Pancreas (tissue), 10 donors: ENCODE measurements at regions of chr3 and their contacts with region 1.

Region 1: DNA sequence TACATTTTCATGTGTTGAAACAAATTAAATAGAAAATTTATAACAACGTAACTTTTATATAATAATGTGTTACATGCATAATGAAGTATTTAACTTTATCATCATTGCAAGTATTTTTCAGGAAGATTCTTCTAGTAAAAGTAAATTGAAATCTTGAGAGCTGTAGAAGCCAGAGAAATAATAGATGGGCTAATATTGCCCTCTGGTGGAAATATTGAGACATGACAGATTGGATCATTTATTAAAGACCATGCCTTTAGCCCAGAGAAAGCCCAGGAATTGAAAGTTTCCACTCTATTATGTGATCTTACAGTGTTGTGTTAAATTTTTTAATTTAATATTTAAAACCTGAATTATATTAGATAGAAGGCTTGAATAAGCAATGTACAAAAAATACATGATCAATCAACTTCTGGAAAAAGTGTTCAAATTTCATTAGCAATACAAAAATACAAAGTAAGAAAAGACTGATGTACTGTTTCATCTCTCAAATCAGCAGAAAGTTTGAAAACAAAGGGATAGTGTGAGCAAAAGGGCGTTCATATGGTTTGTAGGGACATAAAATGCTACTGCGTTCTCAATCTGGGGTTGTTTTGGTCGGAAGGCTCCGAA is 52.7 kb upstream of the SPTSSB start:
- DNase-seq: no peak
- ATAC-seq: peak; percentile 68 to 86 (median 78)
- H3K4me3 ChIP-seq: no peak overlapping the region
- H3K27ac ChIP-seq: no peak overlapping the region
- H3K4me1 ChIP-seq: no peaks in the 10 kb centered on the region
- H3K27me3 ChIP-seq: no peaks in the 10 kb centered on the region
- CTCF ChIP-seq: peak; percentile 30 to 70 (median 64)

Region 2: DNA sequence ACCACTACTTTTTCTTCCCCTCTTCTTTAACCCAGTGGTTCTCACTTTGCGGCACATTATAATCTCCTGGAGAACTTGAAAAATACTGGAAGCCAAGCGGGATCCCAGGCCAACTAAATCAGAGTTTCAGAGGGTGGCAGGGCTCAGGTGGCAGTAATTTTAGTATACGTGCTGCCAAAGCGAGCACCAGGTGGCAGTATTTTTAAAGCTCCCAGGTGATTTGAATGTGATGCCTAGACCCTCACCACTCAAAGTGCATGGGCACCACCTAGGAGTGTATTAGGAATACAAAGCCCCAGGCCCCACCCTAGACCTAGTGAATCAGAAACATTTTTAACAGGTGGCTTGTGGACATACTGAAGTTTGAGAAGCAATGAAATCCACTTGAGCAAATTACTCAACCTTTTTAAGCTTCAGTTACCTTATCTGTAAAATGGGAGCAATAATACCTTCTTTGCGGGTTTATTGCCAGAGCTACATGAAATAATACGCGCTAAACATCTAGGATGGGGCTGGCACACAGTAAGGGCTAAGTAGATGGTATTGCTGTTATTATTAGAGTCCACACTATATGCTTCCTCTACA is 327.2 kb before region 1 on chr3:
- intact Hi-C with region 1: loop called in 1 of 3 experiments (anchors 10 kb)
- DNase-seq: peak in 3 of 6 donors; percentile 20 to 43 (median 23)
- ATAC-seq: peak; percentile 57 to 78 (median 73)
- H3K4me3 ChIP-seq: no peak overlapping the region
- H3K27ac ChIP-seq: no peak overlapping the region
- H3K4me1 ChIP-seq: peaks cover 0 to 3% (median 3%) of the 10 kb centered on the region in 3 donors
- H3K27me3 ChIP-seq: no peaks in the 10 kb centered on the region
- CTCF ChIP-seq: peak in 1 of 4 donors; percentile 17

Region 3: DNA sequence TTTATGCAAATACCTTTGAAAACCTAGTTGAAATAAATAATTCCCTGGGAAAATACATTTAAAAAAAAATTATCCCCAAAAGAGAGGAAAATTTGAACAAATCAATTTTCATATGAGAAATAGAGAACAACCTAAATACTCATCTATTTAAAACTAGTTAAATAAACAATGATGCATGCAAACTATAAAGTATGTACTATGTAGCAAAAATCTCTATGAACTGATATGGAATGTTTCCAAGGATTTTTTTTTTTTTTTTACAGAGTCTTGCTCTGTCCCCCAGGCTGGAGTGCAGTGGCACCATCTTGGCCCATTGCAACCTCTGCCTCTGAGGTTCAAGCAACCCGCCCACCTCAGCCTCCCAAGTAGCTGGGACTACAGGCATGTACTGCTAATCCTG is 291.6 kb before region 1 on chr3:
- intact Hi-C with region 1: no loop called
- DNase-seq: no peak
- ATAC-seq: no peak
- H3K4me3 ChIP-seq: no peak overlapping the region
- H3K27ac ChIP-seq: no peak overlapping the region
- H3K4me1 ChIP-seq: no peaks in the 10 kb centered on the region
- H3K27me3 ChIP-seq: no peaks in the 10 kb centered on the region
- CTCF ChIP-seq: no peak

Region 4: GRCh38 chr3:161559177-161559998 is 135.4 kb after region 1 on chr3:
- intact Hi-C with region 1: no loop called
- DNase-seq: no peak
- ATAC-seq: peak in 3 of 4 donors; percentile 59 to 79 (median 78)
- H3K4me3 ChIP-seq: no peak overlapping the region
- H3K27ac ChIP-seq: no peak overlapping the region
- H3K4me1 ChIP-seq: no peaks in the 10 kb centered on the region
- H3K27me3 ChIP-seq: no peaks in the 10 kb centered on the region
- CTCF ChIP-seq: peak; percentile 19 to 62 (median 45)